CD8-positive, alpha-beta T cell (primary cell): ENCODE measurements at regions of chr5 and their contacts with region 1.

Region 1: DNA sequence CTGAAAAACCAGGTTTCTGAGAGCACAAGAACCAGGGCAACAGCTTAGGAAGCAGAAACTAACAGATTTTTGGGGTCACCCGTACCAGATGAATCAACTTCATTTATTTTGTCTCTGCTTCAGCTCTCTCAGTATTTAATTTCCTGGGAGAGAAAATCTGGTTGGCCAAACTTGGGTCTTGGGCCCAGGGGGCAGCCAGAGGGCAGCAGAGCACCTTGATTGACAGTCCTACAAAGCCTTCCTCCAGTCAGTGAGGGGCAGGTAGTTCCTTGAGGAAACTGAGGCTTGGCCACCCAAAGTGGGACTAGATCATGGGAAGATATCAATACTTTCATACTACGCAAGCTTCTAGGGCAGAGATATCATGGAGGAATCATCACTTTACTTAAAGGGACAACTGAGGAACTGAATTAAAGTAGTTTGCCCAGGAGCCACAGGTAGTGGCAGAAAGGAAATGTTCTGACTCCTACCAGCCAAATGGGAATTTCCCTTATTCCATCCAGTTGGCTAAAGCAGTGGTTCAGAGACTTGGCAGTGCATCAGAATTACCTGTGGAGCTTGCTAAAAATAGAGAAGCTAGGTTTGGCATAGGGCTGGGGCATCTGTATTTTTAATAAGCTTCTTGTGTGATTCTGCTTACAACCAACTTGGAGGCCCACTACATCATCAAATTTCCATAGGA is 21.5 kb upstream of the ARHGAP26 start:
- DNase-seq: peak; percentile 16 to 77 (median 61)
- ATAC-seq: peak; percentile 61
- H3K4me3 ChIP-seq: no peak overlapping the region
- H3K4me3 Mint-ChIP-seq: no peak overlapping the region
- H3K27ac ChIP-seq: no peak overlapping the region
- H3K27ac Mint-ChIP-seq: no peak overlapping the region
- H3K4me1 ChIP-seq: no peaks in the 10 kb centered on the region
- H3K4me1 Mint-ChIP-seq: peaks cover 2% of the 10 kb centered on the region
- H3K27me3 ChIP-seq: no peaks in the 10 kb centered on the region
- H3K27me3 Mint-ChIP-seq: peaks cover 2% of the 10 kb centered on the region
- CTCF ChIP-seq: peak; percentile 66

Region 2: GRCh38 chr5:142735331-142736246 is 13.1 kb before region 1 on chr5:
- CTCF ChIA-PET with region 1: interaction called, 36 read pairs
- POLR2A ChIA-PET with region 1: interaction called, 3 read pairs
- intact Hi-C with region 1: no loop called
- DNase-seq: no peak
- ATAC-seq: no peak
- H3K4me3 ChIP-seq: no peak overlapping the region
- H3K4me3 Mint-ChIP-seq: no peak overlapping the region
- H3K27ac ChIP-seq: no peak overlapping the region
- H3K27ac Mint-ChIP-seq: no peak overlapping the region
- H3K4me1 ChIP-seq: peaks cover 23% of the 10 kb centered on the region
- H3K4me1 Mint-ChIP-seq: peaks cover 35% of the 10 kb centered on the region
- H3K27me3 ChIP-seq: no peaks in the 10 kb centered on the region
- H3K27me3 Mint-ChIP-seq: no peaks in the 10 kb centered on the region
- CTCF ChIP-seq: no peak

Region 3: DNA sequence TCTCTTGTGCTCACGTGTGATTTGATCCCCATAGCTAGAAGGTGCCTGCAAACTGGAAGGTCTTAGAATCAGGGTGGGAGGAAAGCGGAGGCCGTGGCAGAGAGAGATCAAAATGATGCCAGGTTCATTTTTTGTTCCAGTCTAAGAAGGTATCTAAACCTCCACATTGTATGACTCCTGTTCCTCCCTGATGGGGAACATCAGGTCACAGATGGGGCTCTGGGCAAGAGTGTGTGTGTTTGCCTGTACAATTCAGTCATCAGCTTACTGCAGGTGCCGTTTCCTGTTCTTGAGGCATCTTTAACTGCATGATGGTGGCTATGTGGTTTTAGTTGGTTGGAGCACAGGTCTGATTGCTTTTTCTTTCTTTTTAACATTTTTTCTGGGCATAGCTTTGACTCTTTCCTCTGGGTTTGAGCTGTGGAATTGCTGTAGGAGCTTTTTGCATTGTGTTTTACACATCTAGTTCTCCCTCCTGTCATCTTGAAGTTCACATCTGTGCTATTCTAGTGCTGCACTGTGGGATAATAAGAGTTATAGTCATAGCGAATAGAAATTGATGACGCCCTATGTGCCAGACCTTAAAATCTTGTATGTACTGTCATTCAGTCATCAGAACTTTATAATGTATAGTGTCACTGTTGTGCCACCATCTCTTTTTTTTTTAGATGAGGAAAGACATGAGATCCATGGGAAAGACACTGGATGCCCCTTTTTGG is 52.2 kb after region 1 on chr5:
- CTCF ChIA-PET with region 1: interaction called, 32 read pairs
- POLR2A ChIA-PET with region 1: no interaction called
- intact Hi-C with region 1: no loop called
- DNase-seq: peak in 8 of 9 experiments; percentile 25 to 83 (median 60)
- ATAC-seq: peak; percentile 77
- H3K4me3 ChIP-seq: peak overlapping the region; percentile 4 to 32
- H3K4me3 Mint-ChIP-seq: peak overlapping the region; percentile 78
- H3K27ac ChIP-seq: peak overlapping the region; percentile 41 to 70
- H3K27ac Mint-ChIP-seq: peak overlapping the region; percentile 92
- H3K4me1 ChIP-seq: peaks cover 62% of the 10 kb centered on the region
- H3K4me1 Mint-ChIP-seq: peaks cover 83% of the 10 kb centered on the region
- H3K27me3 ChIP-seq: no peaks in the 10 kb centered on the region
- H3K27me3 Mint-ChIP-seq: no peaks in the 10 kb centered on the region
- CTCF ChIP-seq: no peak

Region 4: DNA sequence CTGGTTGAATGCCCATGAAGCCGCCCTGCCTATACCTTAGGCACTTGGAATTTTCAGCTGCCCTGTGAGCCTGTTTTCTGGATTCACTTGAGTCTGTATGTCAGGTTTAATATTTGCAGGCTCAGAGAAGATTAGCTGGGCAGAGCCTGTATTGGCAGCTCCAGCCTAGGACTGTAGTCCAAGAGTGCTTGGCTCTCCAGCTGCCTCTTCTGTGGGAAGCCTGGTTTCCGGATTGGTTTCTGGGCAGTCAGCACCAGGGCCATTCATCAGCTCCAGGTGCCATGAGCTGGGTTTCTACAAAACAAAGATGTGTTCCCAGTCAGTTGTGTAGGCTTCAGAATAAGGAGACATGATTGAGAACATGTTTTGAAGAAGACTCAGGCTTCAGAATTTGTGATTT is 111.6 kb after region 1 on chr5:
- CTCF ChIA-PET with region 1: interaction called, 104 read pairs
- POLR2A ChIA-PET with region 1: interaction called, 4 read pairs
- intact Hi-C with region 1: no loop called
- DNase-seq: no peak
- ATAC-seq: no peak
- H3K4me3 ChIP-seq: no peak overlapping the region
- H3K4me3 Mint-ChIP-seq: no peak overlapping the region
- H3K27ac ChIP-seq: no peak overlapping the region
- H3K27ac Mint-ChIP-seq: no peak overlapping the region
- H3K4me1 ChIP-seq: peaks cover 12% of the 10 kb centered on the region
- H3K4me1 Mint-ChIP-seq: peaks cover 79% of the 10 kb centered on the region
- H3K27me3 ChIP-seq: no peaks in the 10 kb centered on the region
- H3K27me3 Mint-ChIP-seq: no peaks in the 10 kb centered on the region
- CTCF ChIP-seq: no peak

Region 5: GRCh38 chr5:142888469-142889085 is 139.9 kb after region 1 on chr5:
- CTCF ChIA-PET with region 1: interaction called, 269 read pairs
- POLR2A ChIA-PET with region 1: interaction called, 4 read pairs
- intact Hi-C with region 1: loop called in 1 of 2 experiments (anchors 1 kb)
- DNase-seq: peak in 2 of 9 experiments; percentile 45 to 55
- ATAC-seq: no peak
- H3K4me3 ChIP-seq: no peak overlapping the region
- H3K4me3 Mint-ChIP-seq: no peak overlapping the region
- H3K27ac ChIP-seq: no peak overlapping the region
- H3K27ac Mint-ChIP-seq: no peak overlapping the region
- H3K4me1 ChIP-seq: no peaks in the 10 kb centered on the region
- H3K4me1 Mint-ChIP-seq: peaks cover 18% of the 10 kb centered on the region
- H3K27me3 ChIP-seq: no peaks in the 10 kb centered on the region
- H3K27me3 Mint-ChIP-seq: no peaks in the 10 kb centered on the region
- CTCF ChIP-seq: peak; percentile 90

Region 6: DNA sequence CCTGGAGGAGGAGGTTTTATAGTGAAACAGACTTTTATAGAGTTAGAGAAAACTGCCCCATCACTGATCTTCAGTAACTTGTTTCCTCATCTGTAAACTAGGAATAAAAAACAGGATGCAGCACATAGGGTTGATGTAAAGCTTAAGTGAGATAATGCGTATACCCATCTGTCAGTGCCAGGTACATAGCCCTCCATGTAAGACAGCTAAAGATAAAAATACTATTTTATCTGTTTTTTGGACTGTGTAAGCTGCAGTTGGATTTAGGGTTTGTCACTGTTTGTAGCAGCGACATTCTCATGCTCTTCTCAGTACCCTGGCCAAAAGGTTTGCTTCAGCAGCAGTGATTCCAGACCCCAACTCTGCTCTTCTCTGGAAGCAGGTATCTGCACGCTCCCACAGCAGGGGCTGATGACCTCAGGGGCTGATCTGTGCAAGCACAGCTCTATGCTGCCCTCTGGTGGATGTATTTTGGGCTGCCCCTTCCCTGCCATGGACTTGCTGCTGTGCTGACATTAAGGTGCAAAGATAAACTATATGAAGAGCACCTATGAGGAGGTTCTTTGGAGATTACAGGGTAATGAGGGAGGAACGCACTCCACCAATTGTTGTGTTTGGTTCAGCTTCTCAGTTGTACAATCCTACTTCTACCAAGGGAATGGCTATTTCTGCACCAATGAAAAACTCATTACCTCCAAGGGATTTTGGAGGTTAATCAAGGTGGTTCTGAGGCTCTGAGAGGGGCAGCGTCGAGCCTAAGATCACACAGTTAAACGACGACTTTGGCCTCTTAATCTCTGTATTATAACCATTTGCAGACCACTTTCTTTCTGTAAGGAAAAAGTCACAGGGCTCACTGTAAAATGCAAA is 1076.4 kb after region 1 on chr5:
- CTCF ChIA-PET with region 1: no interaction called
- POLR2A ChIA-PET with region 1: no interaction called
- intact Hi-C with region 1: loop called (anchors 1 to 10 kb)
- DNase-seq: peak; percentile 64 to 90 (median 85)
- ATAC-seq: peak; percentile 98
- H3K4me3 ChIP-seq: no peak overlapping the region
- H3K4me3 Mint-ChIP-seq: no peak overlapping the region
- H3K27ac ChIP-seq: no peak overlapping the region
- H3K27ac Mint-ChIP-seq: no peak overlapping the region
- H3K4me1 ChIP-seq: no peaks in the 10 kb centered on the region
- H3K4me1 Mint-ChIP-seq: peaks cover 9% of the 10 kb centered on the region
- H3K27me3 ChIP-seq: no peaks in the 10 kb centered on the region
- H3K27me3 Mint-ChIP-seq: peaks cover 2% of the 10 kb centered on the region
- CTCF ChIP-seq: peak; percentile 95